Activated B cell treated with CpG ODN at 0.5 μM for 24 hours (primary cell): ENCODE measurements at regions of chr1 and their contacts with region 1.

Region 1: DNA sequence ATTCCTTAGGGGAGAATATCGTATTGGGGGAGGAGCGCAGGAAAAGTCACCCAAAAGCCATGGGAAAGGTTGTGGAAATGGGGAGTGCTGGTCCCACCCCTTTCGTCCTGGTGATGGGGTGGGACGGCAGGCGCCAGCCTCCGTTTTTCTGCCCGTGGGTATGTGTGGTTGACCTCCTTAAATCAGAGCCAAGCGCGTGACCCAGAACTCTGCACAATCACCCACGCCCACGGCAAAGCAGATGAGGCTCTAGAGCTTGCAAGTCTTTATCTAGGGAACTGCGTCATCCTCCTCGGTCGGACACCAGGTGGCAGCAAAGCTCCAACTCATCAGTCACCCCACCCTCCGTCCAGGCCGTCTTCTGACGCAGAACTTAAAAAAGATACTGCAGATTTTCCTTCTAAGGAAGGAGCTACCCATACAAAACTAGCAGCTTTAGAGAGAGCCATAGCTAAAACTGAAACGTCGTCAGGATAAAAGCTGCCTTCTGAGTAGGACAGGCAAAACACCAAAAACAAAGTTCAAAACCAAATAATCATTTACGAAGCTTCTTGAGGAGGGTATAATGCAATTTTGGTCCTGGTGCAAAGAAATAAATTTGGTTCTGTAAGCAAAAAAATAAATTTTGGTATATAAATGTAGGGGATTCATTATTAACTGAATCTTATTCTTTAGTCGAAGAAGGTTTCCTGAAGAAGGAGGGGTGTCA is 62.0 kb downstream of the TBX19 start:
- DNase-seq: peak; percentile 65
- ATAC-seq: peak; percentile 100
- H3K4me3 Mint-ChIP-seq: no peak overlapping the region
- H3K27ac Mint-ChIP-seq: no peak overlapping the region
- H3K4me1 Mint-ChIP-seq: peaks cover 9% of the 10 kb centered on the region
- H3K27me3 Mint-ChIP-seq: no peaks in the 10 kb centered on the region
- CTCF ChIP-seq: no peak

Region 2: GRCh38 chr1:167489571-167490340 is 853.0 kb before region 1 on chr1:
- CTCF ChIA-PET with region 1: no interaction called
- POLR2A ChIA-PET with region 1: no interaction called
- intact Hi-C with region 1: no loop called
- DNase-seq: no peak
- ATAC-seq: no peak
- H3K4me3 Mint-ChIP-seq: no peak overlapping the region
- H3K27ac Mint-ChIP-seq: no peak overlapping the region
- H3K4me1 Mint-ChIP-seq: no peaks in the 10 kb centered on the region
- H3K27me3 Mint-ChIP-seq: peaks cover 28% of the 10 kb centered on the region
- CTCF ChIP-seq: no peak

Region 3: DNA sequence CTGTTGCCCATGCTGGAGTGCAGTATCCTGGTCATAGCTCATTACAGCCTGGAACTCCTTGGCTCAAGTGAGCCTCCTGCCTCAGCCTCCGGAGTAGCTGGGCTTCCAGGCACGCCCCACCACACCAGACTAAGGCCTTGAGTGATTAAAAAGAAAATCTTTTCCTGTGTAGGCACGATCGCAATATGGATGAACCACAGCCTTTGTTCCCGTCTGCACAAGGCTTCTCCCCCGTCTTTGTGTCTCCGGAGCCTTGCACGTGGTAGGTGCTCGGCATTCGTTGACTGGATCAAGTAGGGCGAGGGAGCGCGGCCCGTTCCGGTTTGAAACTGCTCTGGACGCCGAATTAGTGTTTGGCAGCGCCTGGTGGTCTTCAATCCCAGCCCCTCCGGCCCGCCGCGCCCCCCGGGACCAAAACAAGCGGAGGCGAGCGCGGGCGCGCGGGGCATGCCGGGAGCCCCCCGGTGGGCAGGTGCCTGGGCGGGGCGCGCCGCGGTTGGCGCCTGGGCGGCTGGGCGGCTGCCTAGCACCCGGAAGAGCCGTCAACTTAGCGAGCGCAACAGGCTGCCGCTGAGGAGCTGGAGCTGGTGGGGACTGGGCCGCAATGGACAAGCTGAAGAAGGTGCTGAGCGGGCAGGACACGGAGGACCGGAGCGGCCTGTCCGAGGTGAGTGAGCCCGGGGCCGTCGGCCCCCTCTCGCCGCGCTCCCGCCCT is 117.1 kb before region 1 on chr1 and contains the start of gene SFT2D2:
- CTCF ChIA-PET with region 1: no interaction called
- POLR2A ChIA-PET with region 1: interaction called, 6 read pairs
- intact Hi-C with region 1: loop called (anchors 5 kb)
- DNase-seq: peak; percentile 85
- ATAC-seq: peak; percentile 92
- H3K4me3 Mint-ChIP-seq: peak within 1 kb of the TSS; percentile 96
- H3K27ac Mint-ChIP-seq: peak within 1 kb of the TSS; percentile 93
- H3K4me1 Mint-ChIP-seq: peaks cover 47% of the 10 kb centered on the region
- H3K27me3 Mint-ChIP-seq: no peaks in the 10 kb centered on the region
- CTCF ChIP-seq: no peak
- total RNA-seq, gene SFT2D2: 62.7 and 63.4 TPM in 2 replicates

Region 4: DNA sequence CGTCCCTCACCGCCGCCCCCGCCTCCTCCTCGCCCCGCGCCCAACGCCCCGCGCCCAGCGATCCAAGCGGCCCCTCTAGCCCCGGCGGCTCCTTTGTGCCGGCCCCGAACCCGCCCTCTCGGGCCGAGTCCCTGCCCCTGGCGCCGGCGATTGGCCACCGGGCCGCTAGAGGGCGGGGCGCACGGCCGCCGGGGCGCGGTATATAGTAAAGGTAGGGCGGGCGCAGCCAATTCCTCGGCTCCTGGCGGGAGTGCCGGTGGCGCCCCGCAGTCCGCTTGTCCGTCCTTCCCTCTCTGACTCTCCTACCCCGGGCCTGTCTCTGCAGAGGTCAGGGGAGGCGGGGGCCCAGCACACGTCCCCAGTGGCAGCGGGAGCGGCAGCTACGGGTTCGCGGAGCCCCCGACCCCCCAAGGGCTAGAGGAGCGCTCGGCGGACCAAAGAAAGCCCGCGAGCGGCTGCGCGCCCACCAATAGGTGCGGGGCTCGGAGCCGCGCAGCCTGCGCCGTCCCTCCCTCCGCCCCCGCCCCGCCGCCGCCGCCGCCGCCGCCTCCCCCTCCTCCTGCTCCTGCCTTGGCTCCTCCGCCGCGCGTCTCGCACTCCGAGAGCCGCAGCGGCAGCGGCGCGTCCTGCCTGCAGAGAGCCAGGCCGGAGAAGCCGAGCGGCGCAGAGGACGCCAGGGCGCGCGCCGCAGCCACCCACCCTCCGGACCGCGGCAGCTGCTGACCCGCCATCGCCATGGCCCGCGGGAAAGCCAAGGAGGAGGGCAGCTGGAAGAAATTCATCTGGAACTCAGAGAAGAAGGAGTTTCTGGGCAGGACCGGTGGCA is 763.6 kb after region 1 on chr1 and contains the start of gene ATP1B1:
- CTCF ChIA-PET with region 1: no interaction called
- POLR2A ChIA-PET with region 1: no interaction called
- intact Hi-C with region 1: loop called (anchors 10 kb)
- DNase-seq: peak; percentile 77
- ATAC-seq: peak; percentile 95
- H3K4me3 Mint-ChIP-seq: peak within 1 kb of the TSS; percentile 89
- H3K27ac Mint-ChIP-seq: no peak within 1 kb of the TSS
- H3K4me1 Mint-ChIP-seq: peaks cover 18% of the 10 kb centered on the region
- H3K27me3 Mint-ChIP-seq: peaks cover 35% of the 10 kb centered on the region
- CTCF ChIP-seq: no peak
- total RNA-seq, gene ATP1B1: 1.6 and 1.8 TPM in 2 replicates

Region 5: GRCh38 chr1:169485544-169486278 is 1143.0 kb after region 1 on chr1 and contains the start of gene SLC19A2:
- CTCF ChIA-PET with region 1: no interaction called
- POLR2A ChIA-PET with region 1: no interaction called
- intact Hi-C with region 1: loop called (anchors 5 kb)
- DNase-seq: peak; percentile 86
- ATAC-seq: peak; percentile 98
- H3K4me3 Mint-ChIP-seq: peak within 1 kb of the TSS; percentile 88
- H3K27ac Mint-ChIP-seq: peak within 1 kb of the TSS; percentile 82
- H3K4me1 Mint-ChIP-seq: peaks cover 27% of the 10 kb centered on the region
- H3K27me3 Mint-ChIP-seq: no peaks in the 10 kb centered on the region
- CTCF ChIP-seq: no peak
- total RNA-seq, gene SLC19A2: 3.0 and 3.6 TPM in 2 replicates

Region 6: DNA sequence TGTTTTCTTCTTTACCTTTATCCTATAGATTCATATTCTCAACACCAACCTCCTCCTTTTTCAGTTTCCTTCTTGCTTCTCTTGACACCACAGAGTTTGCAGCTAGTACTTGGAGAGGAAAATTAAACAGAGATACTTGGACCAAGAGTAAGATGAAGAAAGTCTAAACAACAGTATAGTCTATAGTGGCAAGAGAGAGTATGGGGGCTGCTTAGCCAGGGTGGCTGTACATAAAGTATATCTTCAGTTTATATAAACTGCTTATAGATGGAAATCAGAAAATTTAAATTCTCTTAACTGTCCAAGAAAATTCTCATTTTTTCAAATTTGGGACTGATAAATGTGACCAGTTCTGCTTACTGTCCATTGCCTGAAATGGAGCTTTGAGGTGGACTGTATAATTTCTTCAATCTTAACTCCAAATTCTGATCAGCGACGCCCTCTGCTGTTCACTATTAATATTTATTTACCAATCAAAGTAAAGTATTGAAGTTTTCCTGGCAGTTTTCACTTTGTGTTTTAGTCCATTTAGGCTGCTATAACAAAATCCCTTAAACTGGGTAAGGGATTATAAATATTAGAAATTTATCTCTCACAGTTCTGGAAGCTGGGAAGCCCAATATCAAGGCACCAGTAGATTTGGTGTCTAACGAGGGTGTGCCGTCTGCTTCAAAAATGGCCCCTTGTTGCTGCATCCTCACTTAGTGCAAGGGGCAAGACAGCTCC is 1466.8 kb after region 1 on chr1:
- CTCF ChIA-PET with region 1: interaction called, 7 read pairs
- POLR2A ChIA-PET with region 1: no interaction called
- intact Hi-C with region 1: loop called (anchors 10 kb)
- DNase-seq: no peak
- ATAC-seq: peak; percentile 37
- H3K4me3 Mint-ChIP-seq: no peak overlapping the region
- H3K27ac Mint-ChIP-seq: no peak overlapping the region
- H3K4me1 Mint-ChIP-seq: no peaks in the 10 kb centered on the region
- H3K27me3 Mint-ChIP-seq: no peaks in the 10 kb centered on the region
- CTCF ChIP-seq: peak; percentile 62